BJ (cell line): ENCODE measurements at regions of chr11 and their contacts with region 1.

Region 1: DNA sequence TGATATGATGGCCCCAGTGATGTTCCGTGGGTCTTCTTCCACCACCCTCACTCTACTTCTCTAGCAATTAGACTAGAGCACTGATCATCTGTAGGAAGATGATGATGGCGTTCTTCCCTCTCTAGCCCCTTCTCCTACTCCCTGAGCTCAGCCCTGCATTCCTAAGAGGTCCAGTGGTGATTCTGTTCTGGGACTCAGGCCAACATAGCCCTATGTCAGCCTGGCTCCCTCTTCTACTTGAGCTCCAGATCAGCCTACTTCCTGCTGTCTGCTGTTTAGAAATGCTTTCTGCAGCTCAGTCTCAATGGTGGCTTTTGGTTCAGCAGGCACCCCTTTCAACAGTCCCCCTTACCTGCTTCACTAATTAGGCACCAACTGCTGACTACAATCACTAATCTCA is 86.1 kb upstream of the ZBED5 start:
- DNase-seq: no peak
- H3K4me3 ChIP-seq: no peak overlapping the region
- H3K27me3 ChIP-seq: peaks cover 4% of the 10 kb centered on the region; the same call in 1 of the 2 replicates
- CTCF ChIP-seq: no peak

Region 2: GRCh38 chr11:10933455-10934292 is 10.3 kb before region 1 on chr11:
- CTCF ChIA-PET with region 1: interaction called, 21 read pairs
- POLR2A ChIA-PET with region 1: no interaction called
- DNase-seq: peak; percentile 62
- H3K4me3 ChIP-seq: peak overlapping the region; percentile 49
- H3K27me3 ChIP-seq: no peaks in the 10 kb centered on the region
- CTCF ChIP-seq: peak; percentile 91

Region 3: GRCh38 chr11:10955616-10956015 is 11.6 kb after region 1 on chr11:
- CTCF ChIA-PET with region 1: no interaction called
- POLR2A ChIA-PET with region 1: no interaction called
- DNase-seq: no peak
- H3K4me3 ChIP-seq: no peak overlapping the region
- H3K27me3 ChIP-seq: peaks cover 10% of the 10 kb centered on the region
- CTCF ChIP-seq: no peak